Tibial artery (tissue), 4 donors: ENCODE measurements at regions of chr12 and their contacts with region 1.

Region 1: GRCh38 chr12:54359033-54359761 is 5.1 kb downstream of the GPR84 start:
- DNase-seq: peak; percentile 98
- H3K4me3 ChIP-seq: peak overlapping the region; percentile 72 to 74
- H3K27ac ChIP-seq: peak overlapping the region; percentile 87 to 92
- H3K4me1 ChIP-seq: peaks cover 0 to 23% (median 10%) of the 10 kb centered on the region in 4 donors
- H3K27me3 ChIP-seq: no peaks in the 10 kb centered on the region
- CTCF ChIP-seq: peak in 1 of 2 experiments; percentile 12

Region 2: DNA sequence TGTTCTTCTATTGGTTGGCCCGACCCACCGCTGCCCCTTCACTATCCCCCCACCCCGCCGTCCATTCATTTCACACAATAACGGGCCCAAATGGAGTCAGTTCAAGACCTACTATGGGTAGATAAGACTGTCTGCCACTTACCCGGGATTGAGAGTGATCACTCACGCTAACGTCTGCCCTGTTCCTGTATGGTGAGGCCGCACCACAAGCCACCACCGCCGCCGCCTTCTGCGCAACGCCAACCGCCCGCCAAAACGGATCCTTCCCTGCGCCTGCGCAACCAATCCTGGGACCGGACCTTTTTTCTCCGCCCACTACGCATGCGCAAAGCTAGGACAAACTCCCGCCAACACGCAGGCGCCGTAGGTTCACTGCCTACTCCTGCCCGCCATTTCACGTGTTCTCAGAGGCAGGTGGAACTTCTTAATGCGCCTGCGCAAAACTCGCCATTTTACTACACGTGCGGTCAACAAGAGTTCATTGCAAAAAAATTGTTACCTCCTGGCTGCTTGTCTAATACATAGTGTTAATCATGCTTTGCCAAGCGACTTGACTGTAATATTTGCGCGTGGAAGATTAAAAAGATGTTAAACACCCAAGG is 79.2 kb before region 1 on chr12 and contains the start of gene CBX5:
- intact Hi-C with region 1: loop called (anchors 2 kb)
- DNase-seq: peak; percentile 99 to 100
- H3K4me3 ChIP-seq: peak within 1 kb of the TSS; percentile 60 to 71
- H3K27ac ChIP-seq: peak within 1 kb of the TSS; percentile 90 to 91
- H3K4me1 ChIP-seq: peaks cover 0 to 59% (median 43%) of the 10 kb centered on the region in 4 donors
- H3K27me3 ChIP-seq: no peaks in the 10 kb centered on the region
- CTCF ChIP-seq: no peak

Region 3: GRCh38 chr12:54296393-54297099 is 62.7 kb before region 1 on chr12:
- intact Hi-C with region 1: loop called (anchors 2 kb)
- DNase-seq: no peak
- H3K4me3 ChIP-seq: no peak overlapping the region
- H3K27ac ChIP-seq: no peak overlapping the region
- H3K4me1 ChIP-seq: peaks cover 0 to 12% (median 9%) of the 10 kb centered on the region in 4 donors
- H3K27me3 ChIP-seq: peaks cover 0 to 17% of the 10 kb centered on the region in 2 donors
- CTCF ChIP-seq: no peak

Region 4: GRCh38 chr12:54419088-54419892 is 60.1 kb after region 1 on chr12 and contains the start of gene ITGA5:
- intact Hi-C with region 1: no loop called
- DNase-seq: peak; percentile 86 to 94
- H3K4me3 ChIP-seq: peak within 1 kb of the TSS; percentile 83 to 88
- H3K27ac ChIP-seq: peak within 1 kb of the TSS; percentile 93 to 98
- H3K4me1 ChIP-seq: peaks cover 0 to 74% (median 34%) of the 10 kb centered on the region in 4 donors
- H3K27me3 ChIP-seq: no peaks in the 10 kb centered on the region
- CTCF ChIP-seq: no peak

Region 5: GRCh38 chr12:54431911-54432814 is 73.0 kb after region 1 on chr12:
- intact Hi-C with region 1: no loop called
- DNase-seq: peak; percentile 87 to 96
- H3K4me3 ChIP-seq: peak overlapping the region; percentile 18 to 34
- H3K27ac ChIP-seq: peak overlapping the region; percentile 93 to 98
- H3K4me1 ChIP-seq: peaks cover 0 to 90% (median 52%) of the 10 kb centered on the region in 4 donors
- H3K27me3 ChIP-seq: no peaks in the 10 kb centered on the region
- CTCF ChIP-seq: no peak